Aorta (tissue), 5 donors: ENCODE measurements at regions of chr12 and their contacts with region 1.

Region 1: GRCh38 chr12:49130151-49131050 is 794 bp downstream of the TUBA1B start:
- DNase-seq: peak; percentile 97 to 98
- ATAC-seq: peak; percentile 95
- H3K4me3 ChIP-seq: peak overlapping the region; percentile 69 to 98
- H3K27ac ChIP-seq: peak overlapping the region; percentile 95 to 98
- H3K4me1 ChIP-seq: no peaks in the 10 kb centered on the region
- H3K27me3 ChIP-seq: no peaks in the 10 kb centered on the region

Region 2: DNA sequence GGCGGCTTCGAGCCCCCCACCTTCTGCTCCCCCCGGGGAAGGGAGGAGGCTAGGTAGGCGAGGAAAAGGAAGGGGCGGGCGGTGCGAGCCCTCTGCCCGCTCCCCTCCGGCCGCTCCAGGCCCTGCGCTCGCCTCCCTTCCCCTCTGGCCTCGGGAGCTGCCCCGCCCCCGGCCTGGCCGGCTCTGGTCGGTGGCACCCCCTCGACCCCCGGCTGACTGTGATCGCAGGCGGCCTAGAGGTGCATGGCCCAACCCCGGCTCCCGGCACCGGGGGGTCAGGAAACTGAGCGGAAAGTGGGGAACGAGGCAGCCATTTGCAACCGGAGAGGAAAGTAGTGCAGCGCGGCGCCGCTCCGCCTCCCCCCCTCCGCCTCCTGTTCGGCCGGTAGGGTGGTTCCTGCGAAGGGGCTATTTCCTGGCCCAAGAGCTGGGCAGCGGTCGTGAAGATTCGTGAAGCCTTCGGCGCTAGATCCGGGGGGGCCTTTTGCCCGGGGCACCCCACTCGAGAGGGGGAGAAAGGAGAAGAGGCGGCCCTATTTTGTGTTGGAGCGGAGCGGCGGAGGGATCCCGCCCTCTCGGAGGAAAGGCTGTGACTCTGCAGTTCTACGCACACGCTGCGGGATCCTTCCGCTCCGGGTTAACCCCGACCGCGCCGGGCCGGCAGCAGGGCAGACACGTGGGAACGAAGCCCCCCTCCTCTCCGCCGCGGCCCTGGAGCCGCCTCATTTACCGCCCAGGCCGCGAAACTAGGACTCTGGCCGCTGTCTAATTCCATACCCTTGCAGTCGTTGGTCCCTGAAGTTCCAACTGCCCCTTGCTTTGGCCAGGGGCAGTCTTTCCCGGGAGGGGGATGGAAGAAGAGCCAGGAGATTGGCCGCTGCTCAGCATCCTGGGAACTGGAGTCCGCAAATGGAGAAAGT is 69.9 kb before region 1 on chr12 and contains the start of gene KMT2D:
- intact Hi-C with region 1: loop called in 1 of 2 experiments (anchors 5 kb)
- DNase-seq: peak; percentile 96 to 97
- ATAC-seq: peak; percentile 95
- H3K4me3 ChIP-seq: peak within 1 kb of the TSS; percentile 88 to 92
- H3K27ac ChIP-seq: peak within 1 kb of the TSS; percentile 84 to 86
- H3K4me1 ChIP-seq: no peaks in the 10 kb centered on the region
- H3K27me3 ChIP-seq: no peaks in the 10 kb centered on the region
- total RNA-seq, gene KMT2D: 88.6 to 97.4 TPM

Region 3: GRCh38 chr12:49110464-49111155 is 19.8 kb before region 1 on chr12 and contains the start of gene LMBR1L:
- intact Hi-C with region 1: loop called in 1 of 2 experiments (anchors 2 kb)
- DNase-seq: peak; percentile 97 to 98
- ATAC-seq: peak; percentile 97
- H3K4me3 ChIP-seq: peak within 1 kb of the TSS; percentile 75 to 83
- H3K27ac ChIP-seq: peak within 1 kb of the TSS; percentile 88 to 95
- H3K4me1 ChIP-seq: peaks cover 0 to 3% of the 10 kb centered on the region in 2 donors
- H3K27me3 ChIP-seq: no peaks in the 10 kb centered on the region
- total RNA-seq, gene LMBR1L: 69.2 to 104 TPM

Region 4: GRCh38 chr12:49188914-49189367 is 58.5 kb after region 1 on chr12 and contains the start of gene TUBA1A:
- intact Hi-C with region 1: loop called (anchors 5 kb)
- DNase-seq: peak; percentile 96 to 97
- ATAC-seq: peak; percentile 96
- H3K4me3 ChIP-seq: peak within 1 kb of the TSS; percentile 73 to 92
- H3K27ac ChIP-seq: peak within 1 kb of the TSS; percentile 80 to 91
- H3K4me1 ChIP-seq: no peaks in the 10 kb centered on the region
- H3K27me3 ChIP-seq: no peaks in the 10 kb centered on the region
- total RNA-seq, gene TUBA1A: 148 to 253 TPM

Region 5: GRCh38 chr12:49232940-49233841 is 102.8 kb after region 1 on chr12:
- intact Hi-C with region 1: loop called (anchors 2 kb)
- DNase-seq: peak; percentile 71 to 82
- ATAC-seq: no peak
- H3K4me3 ChIP-seq: peak overlapping the region in 1 of 2 donors; percentile 38
- H3K27ac ChIP-seq: peak overlapping the region in 1 of 2 donors; percentile 91
- H3K4me1 ChIP-seq: peaks cover 0 to 4% of the 10 kb centered on the region in 2 donors
- H3K27me3 ChIP-seq: no peaks in the 10 kb centered on the region

Region 6: GRCh38 chr12:49264738-49265515 is 134.5 kb after region 1 on chr12 and contains the start of gene TUBA1C:
- intact Hi-C with region 1: loop called in 1 of 2 experiments (anchors 10 kb)
- DNase-seq: peak; percentile 97
- ATAC-seq: peak; percentile 98
- H3K4me3 ChIP-seq: peak within 1 kb of the TSS; percentile 63 to 95
- H3K27ac ChIP-seq: peak within 1 kb of the TSS; percentile 85 to 93
- H3K4me1 ChIP-seq: peaks cover 0 to 6% of the 10 kb centered on the region in 2 donors
- H3K27me3 ChIP-seq: no peaks in the 10 kb centered on the region
- total RNA-seq, gene TUBA1C: 89.2 to 181 TPM